CD4-positive, alpha-beta memory T cell (primary cell): ENCODE measurements at regions of chr4 and their contacts with region 1.

Region 1: GRCh38 chr4:184538023-184538599 is 63.8 kb upstream of the IRF2 start:
- DNase-seq: peak; percentile 59 to 71 (median 65)
- H3K4me3 ChIP-seq: peak overlapping the region; percentile 82 to 92
- H3K4me3 Mint-ChIP-seq: peak overlapping the region; percentile 91 to 98 (median 94)
- H3K27ac ChIP-seq: peak overlapping the region; percentile 98
- H3K27ac Mint-ChIP-seq: peak overlapping the region; percentile 94 to 100 (median 99)
- H3K4me1 ChIP-seq: peaks cover 37% of the 10 kb centered on the region
- H3K4me1 Mint-ChIP-seq: peaks cover 28 to 51% (median 35%) of the 10 kb centered on the region in 4 donors
- H3K27me3 ChIP-seq: no peaks in the 10 kb centered on the region
- H3K27me3 Mint-ChIP-seq: no peaks in the 10 kb centered on the region

Region 2: DNA sequence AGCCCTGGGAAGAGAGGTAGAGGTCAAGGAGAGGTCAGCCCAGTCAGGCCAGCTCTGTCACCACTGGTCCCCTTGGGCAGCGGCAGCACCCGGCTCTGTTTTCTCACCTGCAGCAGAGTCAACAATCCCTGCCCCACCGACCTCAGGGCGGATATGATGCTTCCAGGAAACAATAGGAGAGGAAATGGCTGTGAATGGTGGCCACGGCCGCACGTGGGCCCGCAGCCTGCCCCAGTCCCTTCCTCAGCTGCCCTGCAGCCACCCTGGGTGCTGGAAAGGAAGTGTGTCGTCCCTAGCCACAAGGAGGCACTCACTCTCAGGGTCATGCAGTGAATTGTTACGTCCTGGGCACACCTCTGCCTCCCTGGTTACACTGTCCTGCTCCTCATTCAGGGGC is 227.9 kb before region 1 on chr4:
- CTCF ChIA-PET with region 1: interaction called, 5 read pairs
- POLR2A ChIA-PET with region 1: no interaction called
- intact Hi-C with region 1: loop called (anchors 1 kb)
- DNase-seq: peak; percentile 46 to 61 (median 48)
- H3K4me3 ChIP-seq: no peak overlapping the region
- H3K4me3 Mint-ChIP-seq: peak overlapping the region in 7 of 8 donors; percentile 27 to 63 (median 53)
- H3K27ac ChIP-seq: no peak overlapping the region
- H3K27ac Mint-ChIP-seq: peak overlapping the region; percentile 17 to 94 (median 71)
- H3K4me1 ChIP-seq: peaks cover 15% of the 10 kb centered on the region
- H3K4me1 Mint-ChIP-seq: peaks cover 18 to 29% (median 24%) of the 10 kb centered on the region in 4 donors
- H3K27me3 ChIP-seq: no peaks in the 10 kb centered on the region
- H3K27me3 Mint-ChIP-seq: no peaks in the 10 kb centered on the region

Region 3: GRCh38 chr4:184489771-184490170 is 48.3 kb before region 1 on chr4:
- CTCF ChIA-PET with region 1: no interaction called
- POLR2A ChIA-PET with region 1: no interaction called
- intact Hi-C with region 1: loop called (anchors 5 kb)
- DNase-seq: no peak
- H3K4me3 ChIP-seq: no peak overlapping the region
- H3K4me3 Mint-ChIP-seq: no peak overlapping the region
- H3K27ac ChIP-seq: no peak overlapping the region
- H3K27ac Mint-ChIP-seq: no peak overlapping the region
- H3K4me1 ChIP-seq: no peaks in the 10 kb centered on the region
- H3K4me1 Mint-ChIP-seq: peaks cover 0 to 7% (median 2%) of the 10 kb centered on the region in 4 donors
- H3K27me3 ChIP-seq: no peaks in the 10 kb centered on the region
- H3K27me3 Mint-ChIP-seq: no peaks in the 10 kb centered on the region

Region 4: GRCh38 chr4:184514121-184514988 is 23.8 kb before region 1 on chr4:
- CTCF ChIA-PET with region 1: no interaction called
- POLR2A ChIA-PET with region 1: interaction called, 7 read pairs
- intact Hi-C with region 1: loop called (anchors 2 kb)
- DNase-seq: no peak
- H3K4me3 ChIP-seq: peak overlapping the region in 1 of 2 donors; percentile 25
- H3K4me3 Mint-ChIP-seq: peak overlapping the region in 7 of 8 donors; percentile 11 to 82 (median 46)
- H3K27ac ChIP-seq: no peak overlapping the region
- H3K27ac Mint-ChIP-seq: peak overlapping the region in 3 of 7 donors; percentile 10 to 33 (median 14)
- H3K4me1 ChIP-seq: peaks cover 17% of the 10 kb centered on the region
- H3K4me1 Mint-ChIP-seq: peaks cover 13 to 22% (median 18%) of the 10 kb centered on the region in 4 donors
- H3K27me3 ChIP-seq: no peaks in the 10 kb centered on the region
- H3K27me3 Mint-ChIP-seq: no peaks in the 10 kb centered on the region

Region 5: GRCh38 chr4:184825896-184826690 is 288.0 kb after region 1 on chr4 and contains the start of gene ACSL1:
- CTCF ChIA-PET with region 1: no interaction called
- POLR2A ChIA-PET with region 1: interaction called, 4 read pairs
- intact Hi-C with region 1: loop called (anchors 5 kb)
- DNase-seq: peak; percentile 73 to 80 (median 79)
- H3K4me3 ChIP-seq: peak within 1 kb of the TSS; percentile 24 to 55
- H3K4me3 Mint-ChIP-seq: peak within 1 kb of the TSS; percentile 85 to 97 (median 91)
- H3K27ac ChIP-seq: peak within 1 kb of the TSS; percentile 56
- H3K27ac Mint-ChIP-seq: peak within 1 kb of the TSS; percentile 85 to 97 (median 93)
- H3K4me1 ChIP-seq: peaks cover 24% of the 10 kb centered on the region
- H3K4me1 Mint-ChIP-seq: peaks cover 13 to 45% (median 19%) of the 10 kb centered on the region in 4 donors
- H3K27me3 ChIP-seq: no peaks in the 10 kb centered on the region
- H3K27me3 Mint-ChIP-seq: no peaks in the 10 kb centered on the region
- total RNA-seq, gene ACSL1: 11.5 to 12.9 TPM

Region 6: GRCh38 chr4:186201535-186202230 is 1663.6 kb after region 1 on chr4:
- CTCF ChIA-PET with region 1: no interaction called
- POLR2A ChIA-PET with region 1: no interaction called
- intact Hi-C with region 1: loop called (anchors 10 kb)
- DNase-seq: peak; percentile 41 to 77 (median 53)
- H3K4me3 ChIP-seq: no peak overlapping the region
- H3K4me3 Mint-ChIP-seq: peak overlapping the region in 7 of 8 donors; percentile 2 to 65 (median 30)
- H3K27ac ChIP-seq: no peak overlapping the region
- H3K27ac Mint-ChIP-seq: peak overlapping the region; percentile 19 to 94 (median 79)
- H3K4me1 ChIP-seq: no peaks in the 10 kb centered on the region
- H3K4me1 Mint-ChIP-seq: peaks cover 16 to 52% (median 25%) of the 10 kb centered on the region in 4 donors
- H3K27me3 ChIP-seq: no peaks in the 10 kb centered on the region
- H3K27me3 Mint-ChIP-seq: no peaks in the 10 kb centered on the region